BJ (cell line): ENCODE measurements at regions of chr13 and their contacts with region 1.

Region 1: GRCh38 chr13:41622432-41623429 is 165.4 kb downstream of the RGCC start:
- DNase-seq: peak; percentile 91
- H3K4me3 ChIP-seq: no peak overlapping the region
- H3K27me3 ChIP-seq: no peaks in the 10 kb centered on the region
- CTCF ChIP-seq: no peak

Region 2: GRCh38 chr13:41065078-41065477 is 557.7 kb before region 1 on chr13:
- CTCF ChIA-PET with region 1: no interaction called
- POLR2A ChIA-PET with region 1: interaction called, 17 read pairs
- DNase-seq: peak; percentile 75
- H3K4me3 ChIP-seq: no peak overlapping the region
- H3K27me3 ChIP-seq: no peaks in the 10 kb centered on the region
- CTCF ChIP-seq: no peak

Region 3: GRCh38 chr13:41916173-41916954 is 293.6 kb after region 1 on chr13:
- CTCF ChIA-PET with region 1: no interaction called
- POLR2A ChIA-PET with region 1: no interaction called
- DNase-seq: peak; percentile 52
- H3K4me3 ChIP-seq: no peak overlapping the region
- H3K27me3 ChIP-seq: no peaks in the 10 kb centered on the region
- CTCF ChIP-seq: no peak